Activated CD4-positive, alpha-beta T cell treated with anti-CD3 and anti-CD28 coated beads for 36 hours (primary cell): ENCODE measurements at regions of chr3 and their contacts with region 1.

Region 1: GRCh38 chr3:134473868-134474546 is 11.8 kb downstream of the ANAPC13 start:
- DNase-seq: peak; percentile 88
- ATAC-seq: peak; percentile 78
- H3K4me3 Mint-ChIP-seq: no peak overlapping the region
- H3K27ac Mint-ChIP-seq: no peak overlapping the region
- H3K4me1 Mint-ChIP-seq: no peaks in the 10 kb centered on the region
- H3K27me3 Mint-ChIP-seq: no peaks in the 10 kb centered on the region

Region 2: GRCh38 chr3:133821767-133822638 is 652.0 kb before region 1 on chr3:
- CTCF ChIA-PET with region 1: no interaction called
- POLR2A ChIA-PET with region 1: no interaction called
- intact Hi-C with region 1: loop called in 1 of 2 experiments (anchors 2 kb)
- DNase-seq: peak; percentile 21
- ATAC-seq: peak; percentile 39
- H3K4me3 Mint-ChIP-seq: no peak overlapping the region
- H3K27ac Mint-ChIP-seq: no peak overlapping the region
- H3K4me1 Mint-ChIP-seq: peaks cover 3% of the 10 kb centered on the region
- H3K27me3 Mint-ChIP-seq: no peaks in the 10 kb centered on the region

Region 3: GRCh38 chr3:134197681-134198261 is 276.2 kb before region 1 on chr3:
- CTCF ChIA-PET with region 1: interaction called, 35 read pairs
- POLR2A ChIA-PET with region 1: no interaction called
- intact Hi-C with region 1: loop called (anchors 1 kb)
- DNase-seq: no peak
- ATAC-seq: peak; percentile 93
- H3K4me3 Mint-ChIP-seq: no peak overlapping the region
- H3K27ac Mint-ChIP-seq: no peak overlapping the region
- H3K4me1 Mint-ChIP-seq: peaks cover 17% of the 10 kb centered on the region
- H3K27me3 Mint-ChIP-seq: no peaks in the 10 kb centered on the region

Region 4: DNA sequence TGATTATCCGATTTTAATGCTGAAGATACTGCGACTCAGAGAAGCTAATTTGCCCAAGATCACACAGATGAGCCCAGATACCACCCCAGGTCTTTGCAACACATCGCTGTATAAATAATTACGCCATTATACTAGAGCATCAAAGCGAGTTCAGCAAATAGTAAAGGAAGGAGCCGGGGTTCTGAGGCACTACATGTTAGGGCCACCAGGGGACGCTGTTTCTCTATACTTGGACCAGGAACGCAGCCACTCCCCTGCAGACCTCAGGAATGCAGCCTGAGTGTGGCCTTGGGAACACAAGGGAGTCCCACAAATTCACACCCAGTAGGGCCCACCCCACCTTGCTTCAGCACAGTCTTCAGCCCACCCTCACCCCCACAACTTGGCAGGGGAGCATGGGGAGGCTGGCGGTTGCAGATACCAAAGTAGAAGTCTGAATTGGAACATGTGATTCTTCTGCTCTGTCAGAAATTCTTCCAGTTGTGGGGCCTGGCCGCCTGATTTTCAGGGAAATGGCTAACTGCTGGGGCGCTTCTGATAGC is 165.6 kb before region 1 on chr3:
- CTCF ChIA-PET with region 1: interaction called, 67 read pairs
- POLR2A ChIA-PET with region 1: no interaction called
- intact Hi-C with region 1: loop called (anchors 1 kb)
- DNase-seq: peak; percentile 86
- ATAC-seq: peak; percentile 89
- H3K4me3 Mint-ChIP-seq: no peak overlapping the region
- H3K27ac Mint-ChIP-seq: no peak overlapping the region
- H3K4me1 Mint-ChIP-seq: peaks cover 4% of the 10 kb centered on the region
- H3K27me3 Mint-ChIP-seq: peaks cover 32% of the 10 kb centered on the region

Region 5: GRCh38 chr3:134357261-134358184 is 116.5 kb before region 1 on chr3:
- CTCF ChIA-PET with region 1: interaction called, 5 read pairs
- POLR2A ChIA-PET with region 1: no interaction called
- intact Hi-C with region 1: loop called in 1 of 2 experiments (anchors 1 kb)
- DNase-seq: no peak
- ATAC-seq: no peak
- H3K4me3 Mint-ChIP-seq: no peak overlapping the region
- H3K27ac Mint-ChIP-seq: no peak overlapping the region
- H3K4me1 Mint-ChIP-seq: no peaks in the 10 kb centered on the region
- H3K27me3 Mint-ChIP-seq: no peaks in the 10 kb centered on the region

Region 6: GRCh38 chr3:134364061-134364935 is 109.7 kb before region 1 on chr3:
- CTCF ChIA-PET with region 1: interaction called, 12 read pairs
- POLR2A ChIA-PET with region 1: interaction called, 5 read pairs
- intact Hi-C with region 1: no loop called
- DNase-seq: peak; percentile 55
- ATAC-seq: peak; percentile 73
- H3K4me3 Mint-ChIP-seq: peak overlapping the region; percentile 38
- H3K27ac Mint-ChIP-seq: no peak overlapping the region
- H3K4me1 Mint-ChIP-seq: peaks cover 25% of the 10 kb centered on the region
- H3K27me3 Mint-ChIP-seq: no peaks in the 10 kb centered on the region

Region 7: GRCh38 chr3:135310317-135310716 is 836.3 kb after region 1 on chr3:
- CTCF ChIA-PET with region 1: no interaction called
- POLR2A ChIA-PET with region 1: no interaction called
- intact Hi-C with region 1: no loop called
- DNase-seq: no peak
- ATAC-seq: no peak
- H3K4me3 Mint-ChIP-seq: no peak overlapping the region
- H3K27ac Mint-ChIP-seq: no peak overlapping the region
- H3K4me1 Mint-ChIP-seq: no peaks in the 10 kb centered on the region
- H3K27me3 Mint-ChIP-seq: no peaks in the 10 kb centered on the region